ENCODE measurements at regions of chr20 and their contacts with region 1.

Region 1: DNA sequence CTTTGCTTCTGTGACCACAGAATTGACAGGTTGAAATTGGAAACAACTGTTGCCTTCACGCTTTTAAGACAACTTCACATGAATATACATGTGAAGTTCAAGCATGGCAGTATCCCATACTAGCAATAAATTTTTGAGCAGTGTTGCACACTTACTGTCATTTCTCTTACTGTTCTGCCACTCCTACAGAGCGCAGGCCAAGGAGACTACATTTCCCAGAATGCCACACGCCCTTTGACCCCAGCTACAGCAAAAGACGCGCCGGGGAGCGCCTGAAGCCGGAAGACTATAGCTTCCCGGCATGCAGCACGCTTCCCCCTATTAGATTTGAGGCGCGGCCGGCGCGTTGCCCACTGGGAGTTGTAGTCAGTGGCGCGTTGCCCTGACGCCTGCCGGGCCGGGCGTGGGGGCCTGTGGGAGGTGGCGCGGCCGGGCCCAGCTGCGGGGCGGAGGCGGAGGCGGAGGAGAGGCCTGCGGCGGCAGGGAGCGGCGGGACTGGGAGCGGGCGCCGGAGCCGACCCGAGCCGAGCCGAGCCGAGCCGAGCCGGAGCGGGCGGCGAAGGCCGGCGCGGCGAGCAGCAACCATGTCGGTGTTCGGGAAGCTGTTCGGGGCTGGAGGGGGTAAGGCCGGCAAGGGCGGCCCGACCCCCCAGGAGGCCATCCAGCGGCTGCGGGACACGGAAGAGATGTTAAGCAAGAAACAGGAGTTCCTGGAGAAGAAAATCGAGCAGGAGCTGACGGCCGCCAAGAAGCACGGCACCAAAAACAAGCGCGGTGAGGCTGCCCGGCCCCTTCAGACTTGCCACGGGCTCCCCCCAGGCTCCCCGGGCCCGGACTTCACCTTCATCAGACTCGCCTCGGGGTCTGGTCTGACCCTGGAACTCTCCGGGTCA is at the start of gene CHMP4B:
- DNase-seq: peak; percentile 99
- H3K4me3 Mint-ChIP-seq: peak within 1 kb of the TSS; percentile 98
- H3K27ac Mint-ChIP-seq: peak within 1 kb of the TSS; percentile 91
- H3K4me1 Mint-ChIP-seq: peaks cover 40% of the 10 kb centered on the region
- H3K27me3 Mint-ChIP-seq: no peaks in the 10 kb centered on the region
- total RNA-seq, gene CHMP4B: 93.9 to 94.8 TPM

Region 2: GRCh38 chr20:33647603-33648395 is 163.3 kb before region 1 on chr20:
- CTCF ChIA-PET with region 1: no interaction called
- POLR2A ChIA-PET with region 1: no interaction called
- intact Hi-C with region 1: no loop called
- DNase-seq: peak; percentile 15
- H3K4me3 Mint-ChIP-seq: no peak overlapping the region
- H3K27ac Mint-ChIP-seq: no peak overlapping the region
- H3K4me1 Mint-ChIP-seq: peaks cover 42% of the 10 kb centered on the region
- H3K27me3 Mint-ChIP-seq: no peaks in the 10 kb centered on the region

Region 3: GRCh38 chr20:33663161-33664094 is 147.7 kb before region 1 on chr20:
- CTCF ChIA-PET with region 1: no interaction called
- POLR2A ChIA-PET with region 1: no interaction called
- intact Hi-C with region 1: no loop called
- DNase-seq: peak; percentile 90
- H3K4me3 Mint-ChIP-seq: peak overlapping the region; percentile 82
- H3K27ac Mint-ChIP-seq: peak overlapping the region; percentile 89
- H3K4me1 Mint-ChIP-seq: peaks cover 32% of the 10 kb centered on the region
- H3K27me3 Mint-ChIP-seq: no peaks in the 10 kb centered on the region

Region 4: GRCh38 chr20:33686100-33686983 is 124.8 kb before region 1 on chr20 and contains the start of gene E2F1:
- CTCF ChIA-PET with region 1: no interaction called
- POLR2A ChIA-PET with region 1: interaction called, 3 read pairs
- intact Hi-C with region 1: loop called (anchors 1 kb)
- DNase-seq: peak; percentile 98
- H3K4me3 Mint-ChIP-seq: peak within 1 kb of the TSS; percentile 93
- H3K27ac Mint-ChIP-seq: peak within 1 kb of the TSS; percentile 87
- H3K4me1 Mint-ChIP-seq: peaks cover 70% of the 10 kb centered on the region
- H3K27me3 Mint-ChIP-seq: no peaks in the 10 kb centered on the region
- total RNA-seq, gene E2F1: 66.8 to 67.8 TPM

Region 5: DNA sequence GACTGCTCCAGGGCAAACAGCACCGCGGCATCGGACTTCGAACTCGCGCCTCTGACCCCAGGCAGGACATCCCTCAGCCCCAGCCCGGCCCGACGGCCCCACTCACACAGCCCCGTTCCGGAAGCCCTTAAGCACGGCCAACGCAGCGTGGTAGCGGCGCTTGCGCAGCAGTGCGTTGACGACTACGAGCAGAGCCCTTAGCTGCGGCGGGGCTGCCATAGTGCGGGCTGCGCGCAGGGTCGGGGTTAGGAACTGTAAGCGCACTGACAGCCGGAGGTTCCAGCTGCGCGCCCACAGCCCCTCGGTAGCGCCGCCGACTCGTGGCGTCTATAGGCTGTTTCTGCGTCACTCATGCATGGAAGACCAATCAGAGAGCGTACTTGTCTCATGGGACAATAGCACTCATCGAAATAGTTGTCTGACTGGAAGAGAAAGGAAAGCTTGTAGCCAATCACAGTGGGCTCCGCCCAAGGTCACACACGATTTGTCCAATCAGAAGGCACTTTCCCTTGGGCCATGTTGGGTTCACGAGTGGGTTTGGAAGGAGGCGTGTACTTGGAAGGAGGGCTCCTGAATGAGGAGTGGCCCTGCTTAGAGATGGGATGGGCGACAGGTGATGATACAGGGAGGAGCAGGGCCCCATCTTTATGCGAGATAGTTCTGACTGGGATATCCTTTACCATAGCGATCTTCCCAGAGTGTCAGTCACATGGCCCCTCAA is 91.0 kb before region 1 on chr20 and contains the start of gene PXMP4:
- CTCF ChIA-PET with region 1: no interaction called
- POLR2A ChIA-PET with region 1: no interaction called
- intact Hi-C with region 1: loop called (anchors 2 kb)
- DNase-seq: peak; percentile 95
- H3K4me3 Mint-ChIP-seq: peak within 1 kb of the TSS; percentile 95
- H3K27ac Mint-ChIP-seq: peak within 1 kb of the TSS; percentile 75
- H3K4me1 Mint-ChIP-seq: peaks cover 23% of the 10 kb centered on the region
- H3K27me3 Mint-ChIP-seq: no peaks in the 10 kb centered on the region
- total RNA-seq, gene PXMP4: 8.7 to 11.6 TPM

Region 6: GRCh38 chr20:33791959-33792597 is 19.1 kb before region 1 on chr20:
- CTCF ChIA-PET with region 1: interaction called, 14 read pairs
- POLR2A ChIA-PET with region 1: interaction called, 3 read pairs
- intact Hi-C with region 1: no loop called
- DNase-seq: peak; percentile 60
- H3K4me3 Mint-ChIP-seq: no peak overlapping the region
- H3K27ac Mint-ChIP-seq: no peak overlapping the region
- H3K4me1 Mint-ChIP-seq: peaks cover 7% of the 10 kb centered on the region
- H3K27me3 Mint-ChIP-seq: no peaks in the 10 kb centered on the region

Region 7: GRCh38 chr20:34111702-34112599 is 300.8 kb after region 1 on chr20 and contains the start of gene EIF2S2:
- CTCF ChIA-PET with region 1: interaction called, 10 read pairs
- POLR2A ChIA-PET with region 1: interaction called, 17 read pairs
- intact Hi-C with region 1: loop called (anchors 1 kb)
- DNase-seq: peak; percentile 97
- H3K4me3 Mint-ChIP-seq: peak within 1 kb of the TSS; percentile 97
- H3K27ac Mint-ChIP-seq: peak within 1 kb of the TSS; percentile 98
- H3K4me1 Mint-ChIP-seq: peaks cover 41% of the 10 kb centered on the region
- H3K27me3 Mint-ChIP-seq: no peaks in the 10 kb centered on the region
- total RNA-seq, gene EIF2S2: 151 to 155 TPM

Region 8: GRCh38 chr20:34302723-34303528 is 491.8 kb after region 1 on chr20 and contains the start of gene AHCY:
- CTCF ChIA-PET with region 1: no interaction called
- POLR2A ChIA-PET with region 1: no interaction called
- intact Hi-C with region 1: loop called (anchors 1 kb)
- DNase-seq: peak; percentile 97
- H3K4me3 Mint-ChIP-seq: peak within 1 kb of the TSS; percentile 89
- H3K27ac Mint-ChIP-seq: peak within 1 kb of the TSS; percentile 84
- H3K4me1 Mint-ChIP-seq: peaks cover 22% of the 10 kb centered on the region
- H3K27me3 Mint-ChIP-seq: no peaks in the 10 kb centered on the region
- total RNA-seq, gene AHCY: 160 to 163 TPM